Activated CD4-positive, alpha-beta memory T cell treated with anti-CD3 and anti-CD28 coated beads, Interleukin-2, amount 10 ng/mL, durations not matched to agents 7 days and 5 days (primary cell): ENCODE measurements at regions of chr6 and their contacts with region 1.

Region 1: DNA sequence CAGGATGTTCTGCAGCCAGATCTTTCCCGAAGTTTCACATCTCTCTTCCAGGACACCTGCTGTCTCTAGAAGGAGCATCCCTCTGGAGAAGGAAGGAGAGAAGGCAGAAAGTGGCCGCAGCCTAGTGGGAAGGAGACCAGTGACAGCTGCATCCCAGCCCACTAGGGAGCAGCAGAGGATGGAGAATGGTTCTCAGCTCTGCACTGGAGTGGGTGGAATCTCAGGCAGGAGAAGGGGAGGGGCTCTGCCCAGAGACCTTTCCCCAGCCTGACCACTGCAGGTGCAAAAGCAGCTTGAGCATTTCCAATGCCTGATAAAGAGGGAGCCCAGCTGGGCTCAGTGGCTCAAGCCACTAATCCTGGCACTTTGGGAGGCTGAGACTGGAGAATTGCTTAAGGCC is 32.3 kb downstream of the NCR2 start:
- DNase-seq: no peak
- H3K4me3 Mint-ChIP-seq: no peak overlapping the region
- H3K27ac Mint-ChIP-seq: no peak overlapping the region
- H3K4me1 Mint-ChIP-seq: peaks cover 20% of the 10 kb centered on the region
- H3K27me3 Mint-ChIP-seq: peaks cover 66% of the 10 kb centered on the region

Region 2: GRCh38 chr6:41348934-41349333 is 18.8 kb before region 1 on chr6:
- CTCF ChIA-PET with region 1: interaction called, 14 read pairs
- POLR2A ChIA-PET with region 1: no interaction called
- DNase-seq: no peak
- H3K4me3 Mint-ChIP-seq: no peak overlapping the region
- H3K27ac Mint-ChIP-seq: no peak overlapping the region
- H3K4me1 Mint-ChIP-seq: peaks cover 24% of the 10 kb centered on the region
- H3K27me3 Mint-ChIP-seq: peaks cover 42% of the 10 kb centered on the region

Region 3: GRCh38 chr6:41545703-41546474 is 178.2 kb after region 1 on chr6 and contains the start of gene FOXP4:
- CTCF ChIA-PET with region 1: no interaction called
- POLR2A ChIA-PET with region 1: no interaction called
- DNase-seq: peak; percentile 88
- H3K4me3 Mint-ChIP-seq: peak within 1 kb of the TSS; percentile 81
- H3K27ac Mint-ChIP-seq: peak within 1 kb of the TSS; percentile 48
- H3K4me1 Mint-ChIP-seq: peaks cover 30% of the 10 kb centered on the region
- H3K27me3 Mint-ChIP-seq: peaks cover 58% of the 10 kb centered on the region
- total RNA-seq, gene FOXP4: 7.9 to 8.5 TPM

Region 4: DNA sequence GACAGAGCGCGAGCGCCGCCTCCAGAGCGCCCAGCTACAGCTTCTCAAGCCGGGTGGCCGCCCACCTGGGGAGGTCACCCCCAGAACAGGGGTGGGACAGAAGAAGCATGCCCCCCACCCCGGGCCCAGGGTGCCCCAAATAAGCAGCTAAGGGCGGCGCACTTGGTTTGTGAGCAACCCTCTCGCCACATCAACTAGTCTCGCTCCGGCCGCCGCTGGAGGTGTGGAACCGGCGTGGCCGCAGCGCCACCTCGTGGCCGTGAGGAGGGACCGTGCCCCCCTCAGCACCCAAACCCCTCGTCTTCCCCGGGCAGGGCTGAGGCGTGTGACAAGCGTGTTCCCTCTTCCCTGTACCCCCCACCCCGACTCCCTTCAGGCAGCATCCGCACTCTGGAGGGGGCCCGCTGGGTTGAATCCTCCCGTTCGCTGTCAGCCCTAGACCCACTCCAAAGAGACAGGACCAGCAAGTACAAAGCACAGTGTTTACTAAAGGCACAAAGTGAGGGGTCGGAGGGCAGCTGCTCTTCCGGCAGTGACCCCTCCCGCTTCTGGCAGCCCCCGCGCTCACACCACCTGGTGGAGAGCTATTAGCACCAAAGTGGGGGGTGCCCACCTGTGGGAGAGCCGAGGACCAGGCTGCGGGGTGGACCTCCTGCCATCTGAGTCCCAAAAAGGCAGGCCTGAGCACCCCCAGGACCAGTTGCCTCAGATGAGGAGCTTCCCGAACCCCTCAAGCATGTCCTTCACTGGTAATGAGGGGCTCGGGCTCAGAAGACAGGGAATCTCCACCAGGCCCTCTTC is 316.0 kb after region 1 on chr6:
- CTCF ChIA-PET with region 1: interaction called, 10 read pairs
- POLR2A ChIA-PET with region 1: no interaction called
- DNase-seq: peak; percentile 79
- H3K4me3 Mint-ChIP-seq: peak overlapping the region; percentile 55
- H3K27ac Mint-ChIP-seq: peak overlapping the region; percentile 52
- H3K4me1 Mint-ChIP-seq: peaks cover 8% of the 10 kb centered on the region
- H3K27me3 Mint-ChIP-seq: no peaks in the 10 kb centered on the region